Colonic mucosa (tissue), 4 donors: ENCODE measurements at regions of chr19 and their contacts with region 1.

Region 1: DNA sequence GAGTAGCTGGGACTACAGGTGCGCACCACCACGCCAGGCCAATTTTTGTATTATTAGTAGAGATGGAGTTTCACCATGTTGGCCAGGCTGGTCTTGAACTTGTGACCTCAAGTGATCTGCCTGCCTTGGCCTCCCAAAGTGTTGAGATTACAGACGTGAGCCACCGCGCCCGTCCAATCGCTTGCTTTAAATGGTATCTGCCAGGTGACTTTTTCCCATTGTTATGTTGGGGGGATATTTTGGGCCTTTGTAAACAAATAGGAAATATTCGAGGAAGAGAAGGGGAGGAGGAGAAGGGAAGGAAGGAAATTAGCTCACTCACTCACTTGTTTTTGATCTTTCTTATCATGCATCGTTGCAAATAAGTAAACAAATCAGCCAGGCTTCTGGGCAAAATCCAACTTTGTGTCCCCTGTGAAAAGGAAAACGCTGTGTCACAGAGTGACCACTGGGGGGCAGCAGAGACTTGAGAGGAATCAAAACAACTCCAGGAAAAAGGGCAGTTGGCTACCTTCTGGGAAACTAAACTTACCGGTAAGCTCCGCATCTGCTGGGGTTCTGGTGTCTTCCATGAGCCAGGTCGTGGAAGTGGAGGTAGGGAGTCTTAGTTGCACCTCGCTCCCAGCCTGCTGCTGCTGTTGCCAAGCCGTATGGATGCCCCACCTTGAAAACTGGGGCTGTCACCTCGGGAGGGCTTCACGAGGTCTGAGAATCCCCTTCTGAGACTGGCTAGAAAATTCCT is 9.3 kb upstream of the RANBP3 start:
- DNase-seq: peak; percentile 87
- H3K4me3 ChIP-seq: peak overlapping the region; percentile 12
- H3K27ac ChIP-seq: no peak overlapping the region
- H3K4me1 ChIP-seq: no peaks in the 10 kb centered on the region
- H3K27me3 ChIP-seq: no peaks in the 10 kb centered on the region
- CTCF ChIP-seq: peak; percentile 91

Region 2: GRCh38 chr19:6021878-6022569 is 34.8 kb after region 1 on chr19:
- intact Hi-C with region 1: loop called (anchors 2 kb)
- DNase-seq: peak; percentile 80
- H3K4me3 ChIP-seq: no peak overlapping the region
- H3K27ac ChIP-seq: no peak overlapping the region
- H3K4me1 ChIP-seq: no peaks in the 10 kb centered on the region
- H3K27me3 ChIP-seq: no peaks in the 10 kb centered on the region
- CTCF ChIP-seq: peak; percentile 71